Common myeloid progenitor, CD34-positive (primary cell): ENCODE measurements at regions of chr2 and their contacts with region 1.

Region 1: GRCh38 chr2:10285556-10286198 is 17.0 kb upstream of the HPCAL1 start:
- DNase-seq: peak in 2 of 3 donors; percentile 71 to 78
- H3K4me3 ChIP-seq: peak overlapping the region in 3 of 7 experiments; percentile 6 to 23 (median 19)
- H3K27ac ChIP-seq: no peak overlapping the region
- H3K4me1 ChIP-seq: peaks cover 0 to 50% (median 28%) of the 10 kb centered on the region in 4 experiments
- H3K27me3 ChIP-seq: no peaks in the 10 kb centered on the region

Region 2: GRCh38 chr2:9378433-9379390 is 907.0 kb before region 1 on chr2:
- CTCF ChIA-PET with region 1: no interaction called
- POLR2A ChIA-PET with region 1: no interaction called
- DNase-seq: no peak
- H3K4me3 ChIP-seq: no peak overlapping the region
- H3K27ac ChIP-seq: no peak overlapping the region
- H3K4me1 ChIP-seq: peaks cover 0 to 13% (median under 1%) of the 10 kb centered on the region in 4 experiments
- H3K27me3 ChIP-seq: no peaks in the 10 kb centered on the region

Region 3: DNA sequence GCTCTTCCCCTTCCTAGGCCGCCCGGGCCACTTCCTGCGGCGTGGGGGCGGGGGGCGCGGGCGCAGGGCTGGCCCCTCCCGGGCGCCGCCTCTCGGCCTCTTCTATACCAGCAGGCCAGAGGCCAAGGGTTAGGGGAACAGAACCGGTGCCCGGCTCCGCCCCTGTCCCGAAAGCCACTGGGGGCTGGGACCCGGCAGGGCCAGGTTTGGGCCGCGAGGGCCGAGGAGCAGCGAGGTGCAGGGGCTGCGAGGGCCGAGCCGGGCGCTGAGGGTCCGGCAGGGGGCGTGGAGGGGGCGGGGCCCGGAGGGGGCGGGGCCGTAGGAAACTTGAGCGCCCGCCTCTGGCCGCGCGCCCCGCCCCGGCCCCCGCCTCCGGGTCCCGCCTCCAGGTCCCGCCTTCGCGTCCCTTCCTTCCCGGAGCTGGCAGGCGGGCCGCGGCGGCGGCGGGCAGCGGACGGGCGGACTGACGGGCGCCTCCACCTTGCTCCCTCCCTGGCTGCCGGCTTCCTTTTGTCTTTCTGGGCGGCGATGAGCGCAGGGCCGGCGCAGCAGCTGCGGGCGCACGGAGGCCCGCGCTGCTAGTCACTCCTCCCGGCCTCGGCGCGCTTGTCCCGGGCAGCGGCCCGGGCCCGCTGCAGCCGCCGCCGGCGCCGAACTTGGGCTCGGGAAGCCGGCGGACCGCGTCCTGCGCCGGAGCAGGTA is 17.0 kb after region 1 on chr2 and contains the start of gene HPCAL1:
- CTCF ChIA-PET with region 1: interaction called, 16 read pairs
- POLR2A ChIA-PET with region 1: no interaction called
- DNase-seq: peak; percentile 78 to 88 (median 84)
- H3K4me3 ChIP-seq: peak within 1 kb of the TSS; percentile 78 to 96 (median 91)
- H3K27ac ChIP-seq: peak within 1 kb of the TSS in 1 of 2 experiments; percentile 68
- H3K4me1 ChIP-seq: peaks cover 13 to 70% (median 65%) of the 10 kb centered on the region in 4 experiments
- H3K27me3 ChIP-seq: no peaks in the 10 kb centered on the region

Region 4: DNA sequence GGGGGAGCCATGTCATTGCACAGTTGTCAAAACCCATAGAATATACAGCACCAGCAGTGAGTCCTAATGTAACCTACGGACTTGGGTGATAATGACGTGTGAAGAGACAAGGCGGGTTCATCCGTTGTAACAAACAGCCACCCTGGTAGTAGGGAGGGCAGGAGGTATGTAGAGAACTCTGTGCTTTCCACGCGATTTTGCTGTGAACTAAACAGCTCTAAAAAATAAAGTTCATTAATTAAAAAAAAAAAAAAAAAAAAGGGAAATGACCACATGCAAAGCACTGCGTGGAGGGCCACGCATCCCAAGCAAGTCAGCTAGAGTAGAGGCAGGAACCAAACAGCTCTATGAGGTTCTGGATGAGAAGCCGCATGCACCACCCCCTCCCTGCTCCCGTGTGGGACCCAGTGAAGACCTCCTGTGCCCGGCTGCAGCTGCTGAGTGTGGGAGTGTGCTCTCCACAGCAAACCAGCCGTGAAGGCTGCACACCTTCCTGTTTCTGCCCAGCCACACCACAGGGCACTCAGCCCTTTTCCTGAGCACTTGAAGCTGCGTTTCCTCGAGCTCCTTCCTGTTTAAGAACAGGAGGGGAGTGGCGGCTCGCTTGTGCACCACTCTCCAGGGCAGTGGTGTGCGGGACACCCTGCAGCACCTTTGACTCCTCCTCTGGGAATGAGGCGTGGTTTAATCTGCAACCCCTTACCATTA is 96.8 kb after region 1 on chr2:
- CTCF ChIA-PET with region 1: no interaction called
- POLR2A ChIA-PET with region 1: no interaction called
- DNase-seq: peak; percentile 65 to 91 (median 83)
- H3K4me3 ChIP-seq: peak overlapping the region in 6 of 7 experiments; percentile 8 to 60 (median 34)
- H3K27ac ChIP-seq: no peak overlapping the region
- H3K4me1 ChIP-seq: peaks cover 21 to 95% (median 87%) of the 10 kb centered on the region in 4 experiments
- H3K27me3 ChIP-seq: no peaks in the 10 kb centered on the region